Activated CD4-positive, alpha-beta T cell treated with anti-CD3 and anti-CD28 coated beads for 36 hours (primary cell): ENCODE measurements at regions of chr2 and their contacts with region 1.

Region 1: GRCh38 chr2:47906157-47907038 is at the start of gene FBXO11:
- DNase-seq: peak; percentile 97
- ATAC-seq: peak; percentile 85
- H3K4me3 Mint-ChIP-seq: peak within 1 kb of the TSS; percentile 95
- H3K27ac Mint-ChIP-seq: peak within 1 kb of the TSS; percentile 98
- H3K4me1 Mint-ChIP-seq: peaks cover 25% of the 10 kb centered on the region
- H3K27me3 Mint-ChIP-seq: no peaks in the 10 kb centered on the region
- total RNA-seq, gene FBXO11: 33.0 to 40.3 TPM

Region 2: GRCh38 chr2:46836295-46837111 is 1069.9 kb before region 1 on chr2:
- CTCF ChIA-PET with region 1: no interaction called
- POLR2A ChIA-PET with region 1: no interaction called
- intact Hi-C with region 1: no loop called
- DNase-seq: no peak
- ATAC-seq: no peak
- H3K4me3 Mint-ChIP-seq: no peak overlapping the region
- H3K27ac Mint-ChIP-seq: no peak overlapping the region
- H3K4me1 Mint-ChIP-seq: no peaks in the 10 kb centered on the region
- H3K27me3 Mint-ChIP-seq: peaks cover 2% of the 10 kb centered on the region

Region 3: DNA sequence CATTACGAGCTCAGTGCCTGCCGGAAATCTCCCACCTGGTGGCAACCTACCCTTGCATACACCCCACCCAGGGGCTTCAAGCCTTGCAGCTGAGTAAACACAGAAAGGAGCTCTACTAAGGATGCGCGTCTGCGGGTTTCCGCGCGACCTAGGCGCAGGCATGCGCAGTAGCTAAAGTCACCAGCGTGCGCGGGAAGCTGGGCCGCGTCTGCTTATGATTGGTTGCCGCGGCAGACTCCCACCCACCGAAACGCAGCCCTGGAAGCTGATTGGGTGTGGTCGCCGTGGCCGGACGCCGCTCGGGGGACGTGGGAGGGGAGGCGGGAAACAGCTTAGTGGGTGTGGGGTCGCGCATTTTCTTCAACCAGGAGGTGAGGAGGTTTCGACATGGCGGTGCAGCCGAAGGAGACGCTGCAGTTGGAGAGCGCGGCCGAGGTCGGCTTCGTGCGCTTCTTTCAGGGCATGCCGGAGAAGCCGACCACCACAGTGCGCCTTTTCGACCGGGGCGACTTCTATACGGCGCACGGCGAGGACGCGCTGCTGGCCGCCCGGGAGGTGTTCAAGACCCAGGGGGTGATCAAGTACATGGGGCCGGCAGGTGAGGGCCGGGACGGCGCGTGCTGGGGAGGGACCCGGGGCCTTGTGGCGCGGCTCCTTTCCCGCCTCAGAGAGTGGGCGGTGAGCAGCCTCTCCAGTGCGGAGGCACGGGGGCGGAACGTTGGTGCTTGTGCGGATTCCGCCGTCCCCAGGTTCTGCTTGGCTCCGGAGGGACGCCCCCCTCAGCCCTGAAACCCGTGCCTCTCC is 503.4 kb before region 1 on chr2 and contains the start of gene MSH2:
- CTCF ChIA-PET with region 1: no interaction called
- POLR2A ChIA-PET with region 1: no interaction called
- intact Hi-C with region 1: loop called in 1 of 2 experiments (anchors 10 kb)
- DNase-seq: peak; percentile 96
- ATAC-seq: peak; percentile 95
- H3K4me3 Mint-ChIP-seq: peak within 1 kb of the TSS; percentile 84
- H3K27ac Mint-ChIP-seq: peak within 1 kb of the TSS; percentile 98
- H3K4me1 Mint-ChIP-seq: peaks cover 35% of the 10 kb centered on the region
- H3K27me3 Mint-ChIP-seq: no peaks in the 10 kb centered on the region
- total RNA-seq, gene MSH2: 61.0 to 65.2 TPM

Region 4: DNA sequence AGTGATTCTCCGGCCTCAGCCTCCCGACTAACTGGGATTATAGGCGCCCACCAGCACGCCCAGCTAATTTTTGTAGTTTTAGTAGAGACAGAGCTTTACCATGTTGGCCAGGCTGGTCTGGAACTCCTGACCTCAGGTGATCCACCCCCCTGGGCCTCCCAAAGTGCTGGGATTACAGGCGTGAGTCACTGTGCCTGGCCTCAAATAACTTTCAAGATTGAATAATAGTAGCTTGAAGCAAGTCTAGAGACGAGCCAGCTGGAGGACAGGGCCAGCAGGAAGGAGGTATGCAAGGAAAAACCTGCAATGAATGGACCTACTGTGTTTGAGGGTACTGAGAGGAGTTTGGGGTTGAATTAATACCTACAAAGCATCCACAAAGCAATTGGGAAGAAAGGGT is 416.0 kb before region 1 on chr2:
- CTCF ChIA-PET with region 1: no interaction called
- POLR2A ChIA-PET with region 1: no interaction called
- intact Hi-C with region 1: no loop called
- DNase-seq: no peak
- ATAC-seq: no peak
- H3K4me3 Mint-ChIP-seq: no peak overlapping the region
- H3K27ac Mint-ChIP-seq: no peak overlapping the region
- H3K4me1 Mint-ChIP-seq: peaks cover 13% of the 10 kb centered on the region
- H3K27me3 Mint-ChIP-seq: no peaks in the 10 kb centered on the region

Region 5: DNA sequence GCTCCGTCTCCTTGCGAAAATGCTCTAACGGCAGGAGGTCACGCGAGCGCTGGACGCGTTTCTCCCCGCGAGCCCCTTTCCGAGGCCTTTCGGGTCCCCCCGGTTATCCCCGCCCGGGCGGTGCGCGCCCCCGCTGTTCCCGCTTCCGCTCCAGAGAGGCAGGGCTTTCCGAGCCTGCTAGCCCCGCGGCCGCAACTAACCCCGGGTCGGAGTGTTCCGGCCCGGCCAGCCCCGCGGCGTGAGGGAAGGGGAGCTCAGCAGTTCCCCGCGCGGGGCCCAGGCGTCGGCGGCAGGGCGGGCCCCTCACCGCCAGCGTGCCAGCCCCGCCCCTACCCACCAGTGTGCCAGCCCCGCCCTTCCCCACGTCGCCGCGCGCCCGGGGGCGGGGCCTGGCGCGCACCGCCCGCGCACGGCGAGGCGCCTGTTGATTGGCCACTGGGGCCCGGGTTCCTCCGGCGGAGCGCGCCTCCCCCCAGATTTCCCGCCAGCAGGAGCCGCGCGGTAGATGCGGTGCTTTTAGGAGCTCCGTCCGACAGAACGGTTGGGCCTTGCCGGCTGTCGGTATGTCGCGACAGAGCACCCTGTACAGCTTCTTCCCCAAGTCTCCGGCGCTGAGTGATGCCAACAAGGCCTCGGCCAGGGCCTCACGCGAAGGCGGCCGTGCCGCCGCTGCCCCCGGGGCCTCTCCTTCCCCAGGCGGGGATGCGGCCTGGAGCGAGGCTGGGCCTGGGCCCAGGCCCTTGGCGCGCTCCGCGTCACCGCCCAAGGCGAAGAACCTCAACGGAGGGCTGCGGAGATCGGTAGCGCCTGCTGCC is 123.5 kb before region 1 on chr2 and contains the start of gene MSH6:
- CTCF ChIA-PET with region 1: no interaction called
- POLR2A ChIA-PET with region 1: interaction called, 11 read pairs
- intact Hi-C with region 1: loop called (anchors 1 to 2 kb)
- DNase-seq: peak; percentile 93
- ATAC-seq: peak; percentile 92
- H3K4me3 Mint-ChIP-seq: peak within 1 kb of the TSS; percentile 84
- H3K27ac Mint-ChIP-seq: peak within 1 kb of the TSS; percentile 82
- H3K4me1 Mint-ChIP-seq: peaks cover 31% of the 10 kb centered on the region
- H3K27me3 Mint-ChIP-seq: no peaks in the 10 kb centered on the region
- total RNA-seq, gene MSH6: 119 to 166 TPM

Region 6: DNA sequence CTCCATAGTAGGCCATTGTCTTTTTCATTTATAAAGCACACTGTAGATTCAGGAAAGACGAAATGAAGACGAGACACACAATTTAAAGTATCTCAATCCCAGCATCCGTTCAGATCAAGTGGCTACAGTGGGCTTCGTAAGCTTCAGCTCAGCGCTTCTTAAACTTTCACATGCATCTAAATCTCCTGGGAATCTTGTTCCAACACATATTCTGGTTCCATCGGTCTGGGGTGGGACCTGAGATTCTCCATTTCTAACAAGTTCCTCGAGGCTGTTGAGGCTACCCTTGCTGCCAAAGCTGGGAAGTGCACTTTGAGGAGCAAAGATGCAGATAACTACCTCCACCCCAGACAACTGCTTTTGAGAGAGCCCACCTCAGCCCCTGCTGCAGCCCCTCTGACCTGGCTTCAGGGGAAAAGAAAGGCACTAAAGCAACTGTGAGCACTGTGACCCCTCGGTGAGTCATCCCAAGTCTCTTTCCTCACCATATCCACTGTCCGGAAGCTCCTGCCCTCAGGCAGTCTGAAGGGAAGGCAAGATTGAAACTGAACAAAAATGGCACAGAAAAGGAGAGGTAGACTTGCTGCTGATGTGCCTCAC is 201.0 kb after region 1 on chr2:
- CTCF ChIA-PET with region 1: interaction called, 9 read pairs
- POLR2A ChIA-PET with region 1: no interaction called
- intact Hi-C with region 1: loop called (anchors 1 to 2 kb)
- DNase-seq: no peak
- ATAC-seq: no peak
- H3K4me3 Mint-ChIP-seq: no peak overlapping the region
- H3K27ac Mint-ChIP-seq: no peak overlapping the region
- H3K4me1 Mint-ChIP-seq: peaks cover 17% of the 10 kb centered on the region
- H3K27me3 Mint-ChIP-seq: no peaks in the 10 kb centered on the region

Region 7: DNA sequence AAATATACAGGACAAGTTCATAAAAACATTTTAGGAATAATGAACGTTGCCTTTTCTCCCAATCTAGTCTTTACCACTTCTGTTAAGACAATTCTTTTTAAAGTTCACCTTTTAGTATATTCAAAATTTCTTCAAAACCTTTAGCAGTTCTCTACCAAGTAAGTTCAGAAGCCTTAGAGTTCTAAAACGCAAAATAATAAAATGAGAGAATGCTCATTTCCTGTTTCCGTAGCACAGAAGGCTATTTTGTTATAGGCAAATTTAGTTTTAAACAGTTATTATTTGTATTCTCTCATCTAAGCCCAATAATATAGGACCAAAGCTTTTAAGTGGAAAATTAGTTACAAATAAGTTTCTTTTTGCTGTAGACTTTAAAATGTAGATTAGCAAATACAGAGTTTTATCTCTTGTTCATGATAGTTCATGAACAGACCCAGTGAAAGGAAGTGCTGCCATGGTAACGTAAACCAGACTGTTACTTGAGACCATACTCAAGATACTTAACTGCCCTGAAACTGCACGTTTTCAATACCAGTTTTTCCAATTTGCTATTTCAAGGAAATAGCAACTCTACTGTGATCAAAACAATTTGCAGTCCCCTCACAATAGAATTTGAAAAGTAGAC is 450.4 kb after region 1 on chr2:
- CTCF ChIA-PET with region 1: no interaction called
- POLR2A ChIA-PET with region 1: no interaction called
- intact Hi-C with region 1: loop called in 1 of 2 experiments (anchors 5 kb)
- DNase-seq: peak; percentile 52
- ATAC-seq: peak; percentile 96
- H3K4me3 Mint-ChIP-seq: peak overlapping the region; percentile 55
- H3K27ac Mint-ChIP-seq: peak overlapping the region; percentile 96
- H3K4me1 Mint-ChIP-seq: peaks cover 65% of the 10 kb centered on the region
- H3K27me3 Mint-ChIP-seq: no peaks in the 10 kb centered on the region